ENCODE measurements at regions of chr2 and their contacts with region 1.

Region 1: DNA sequence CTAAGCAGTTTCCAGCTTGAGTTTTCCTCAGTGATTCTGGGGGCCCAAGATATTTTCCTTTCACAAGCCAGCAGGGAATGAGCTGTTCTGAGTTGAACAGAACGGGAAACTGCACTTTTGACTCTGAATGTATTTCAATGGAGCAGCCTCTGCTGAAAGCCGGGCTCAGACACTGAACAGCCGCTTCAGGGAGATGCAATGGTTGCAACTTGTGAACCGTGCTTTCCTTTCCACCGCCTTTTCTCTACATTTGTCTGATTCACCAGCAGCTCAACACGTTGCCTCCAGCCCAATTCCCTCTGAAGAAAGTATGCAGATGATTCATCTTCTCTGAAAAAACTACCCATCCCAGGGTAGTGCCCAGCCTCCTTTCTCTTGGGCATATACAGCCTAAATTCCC is 119.3 kb upstream of the PKDCC start:
- DNase-seq: no peak
- ATAC-seq: no peak
- H3K4me3 ChIP-seq: no peak overlapping the region
- H3K27ac ChIP-seq: peak overlapping the region; percentile 85
- H3K4me1 ChIP-seq: peaks cover 75% of the 10 kb centered on the region
- H3K27me3 ChIP-seq: no peaks in the 10 kb centered on the region
- CTCF ChIP-seq: no peak

Region 2: DNA sequence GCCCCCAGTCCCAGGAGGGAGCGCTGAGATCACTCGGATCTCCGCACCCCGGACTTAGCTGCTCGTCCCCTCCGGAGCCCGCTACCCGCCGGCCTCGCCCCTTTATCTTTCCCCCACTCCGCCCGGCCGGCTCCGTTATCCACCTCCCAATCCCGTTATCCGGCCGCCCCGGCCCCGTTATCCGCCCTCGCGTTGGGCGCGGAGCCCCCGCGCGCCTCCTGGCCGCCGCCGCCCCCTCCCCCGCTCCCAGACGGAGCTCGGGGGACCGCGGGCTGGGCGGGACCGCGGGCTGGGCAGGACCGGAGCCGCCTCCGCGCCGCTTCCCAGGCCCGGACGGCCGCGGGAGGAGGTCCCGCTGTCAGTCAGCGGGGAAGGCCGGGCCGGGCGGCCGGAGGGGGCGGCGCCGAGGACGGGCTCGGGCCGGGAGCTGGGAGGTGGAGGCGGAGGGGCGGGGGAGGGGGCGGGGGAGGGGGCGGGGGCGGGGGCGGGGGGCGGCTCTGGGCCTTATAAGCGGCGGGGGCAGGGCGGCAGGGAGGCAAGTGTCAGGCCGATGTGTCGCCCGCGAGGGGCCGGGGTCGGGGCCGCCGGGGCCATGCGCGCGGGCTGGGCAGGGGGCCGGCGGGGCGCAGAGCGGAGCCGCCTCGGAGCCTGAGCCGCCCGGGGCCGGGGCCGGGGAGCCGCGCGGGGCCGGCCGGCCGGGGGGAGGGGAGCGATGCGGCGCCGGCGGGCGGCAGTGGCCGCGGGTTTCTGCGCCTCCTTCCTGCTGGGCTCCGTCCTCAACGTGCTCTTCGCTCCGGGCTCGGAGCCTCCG is 119.2 kb after region 1 on chr2 and contains the start of gene PKDCC:
- intact Hi-C with region 1: loop called (anchors 2 to 5 kb)
- DNase-seq: peak; percentile 89 to 94
- ATAC-seq: peak; percentile 77 to 84 (median 80)
- H3K4me3 ChIP-seq: peak within 1 kb of the TSS; percentile 95
- H3K27ac ChIP-seq: peak within 1 kb of the TSS; percentile 94
- H3K4me1 ChIP-seq: peaks cover 34% of the 10 kb centered on the region
- H3K27me3 ChIP-seq: no peaks in the 10 kb centered on the region
- CTCF ChIP-seq: no peak
- total RNA-seq, gene PKDCC: 45.6 to 159 (median 111) TPM

Region 3: GRCh38 chr2:42053791-42054701 is 125.5 kb after region 1 on chr2:
- intact Hi-C with region 1: loop called (anchors 2 to 5 kb)
- DNase-seq: peak; percentile 68 to 89
- ATAC-seq: peak; percentile 80 to 90 (median 84)
- H3K4me3 ChIP-seq: peak overlapping the region; percentile 95
- H3K27ac ChIP-seq: peak overlapping the region; percentile 94
- H3K4me1 ChIP-seq: peaks cover 82% of the 10 kb centered on the region
- H3K27me3 ChIP-seq: no peaks in the 10 kb centered on the region
- CTCF ChIP-seq: no peak

Measured in psoas muscle (tissue), 8 donors.